ENCODE measurements at regions of chr2 and their contacts with region 1.

Region 1: DNA sequence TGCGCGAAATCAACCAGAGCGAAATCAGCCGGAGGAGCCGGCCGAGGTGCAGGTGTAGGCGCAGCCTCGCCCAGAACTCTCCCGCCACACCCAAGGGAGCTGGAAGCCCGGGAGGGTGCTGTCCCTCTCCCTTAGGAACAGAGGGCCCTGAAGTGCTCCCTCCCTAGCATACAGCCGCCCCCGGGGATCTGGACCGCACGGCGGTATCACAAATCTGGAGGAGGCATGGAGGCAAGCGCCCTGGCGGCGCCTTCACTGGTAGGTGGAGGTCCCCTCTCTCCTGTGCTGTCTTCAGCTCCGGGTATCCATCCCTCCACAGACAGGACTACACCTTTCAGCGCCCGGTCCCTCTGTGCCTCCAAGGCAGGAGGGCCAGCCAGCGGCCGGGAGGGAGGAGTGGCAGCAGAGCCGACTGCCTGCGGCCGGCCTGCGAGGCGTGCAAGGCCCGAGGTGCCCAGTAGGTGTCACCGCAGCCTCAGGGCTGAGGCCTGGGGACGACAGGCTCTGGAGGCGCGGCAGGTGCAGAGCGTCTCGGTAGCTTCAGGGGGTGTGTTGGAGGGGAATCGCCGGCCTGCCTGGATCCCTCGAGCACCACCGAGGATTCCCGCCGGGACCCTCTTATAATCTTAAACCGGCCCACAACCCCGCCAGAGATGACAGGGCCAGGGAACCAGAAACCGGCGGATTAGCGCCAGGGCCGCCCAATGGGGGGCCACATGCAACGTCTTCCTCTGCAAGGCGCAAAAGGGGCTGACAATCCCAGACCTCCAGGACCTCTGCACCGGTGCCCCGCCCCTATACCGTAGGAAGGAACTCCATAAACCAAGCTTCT is 2.8 kb downstream of the IHH start:
- DNase-seq: peak; percentile 91
- ATAC-seq: peak; percentile 82
- H3K4me3 Mint-ChIP-seq: peak overlapping the region; percentile 58
- H3K27ac Mint-ChIP-seq: no peak overlapping the region
- H3K4me1 Mint-ChIP-seq: peaks cover 25% of the 10 kb centered on the region
- H3K27me3 Mint-ChIP-seq: peaks cover 96% of the 10 kb centered on the region
- CTCF ChIP-seq: peak; percentile 80

Region 2: GRCh38 chr2:219002395-219003266 is 55.3 kb before region 1 on chr2:
- CTCF ChIA-PET with region 1: interaction called, 33 read pairs
- POLR2A ChIA-PET with region 1: interaction called, 3 read pairs
- DNase-seq: peak; percentile 95
- ATAC-seq: peak; percentile 69
- H3K4me3 Mint-ChIP-seq: peak overlapping the region; percentile 83
- H3K27ac Mint-ChIP-seq: no peak overlapping the region
- H3K4me1 Mint-ChIP-seq: peaks cover 22% of the 10 kb centered on the region
- H3K27me3 Mint-ChIP-seq: peaks cover 100% of the 10 kb centered on the region
- CTCF ChIP-seq: peak; percentile 29; the same call in 1 of the 2 replicates

Region 3: DNA sequence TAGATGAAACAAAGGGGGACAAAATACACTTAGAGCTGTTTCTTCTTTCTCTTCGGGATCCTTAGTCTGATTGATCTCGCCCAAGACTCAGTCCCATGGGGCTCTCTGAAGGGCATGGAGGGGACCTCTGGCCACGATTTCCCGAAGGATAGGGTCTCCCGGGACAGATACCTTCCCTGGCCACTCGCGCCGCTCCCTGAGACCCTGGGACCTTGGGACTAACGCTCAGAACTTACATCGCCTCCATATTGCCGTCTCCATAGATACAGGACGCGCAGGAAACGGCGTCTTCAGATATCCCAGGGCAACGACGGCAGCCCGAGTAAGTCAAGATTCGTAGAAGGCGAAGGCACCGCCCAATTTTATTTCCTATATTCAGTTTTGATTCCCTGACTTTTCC is 16.7 kb before region 1 on chr2 and contains the start of gene CFAP65:
- CTCF ChIA-PET with region 1: interaction called, 10 read pairs
- POLR2A ChIA-PET with region 1: no interaction called
- DNase-seq: peak; percentile 69
- ATAC-seq: peak; percentile 91
- H3K4me3 Mint-ChIP-seq: peak within 1 kb of the TSS; percentile 86
- H3K27ac Mint-ChIP-seq: 0 out of 2 replicates have a peak within 1 kb of the TSS, but pooled peaks have one; percentile 8
- H3K4me1 Mint-ChIP-seq: peaks cover 4% of the 10 kb centered on the region; the same call in 1 of the 2 replicates
- H3K27me3 Mint-ChIP-seq: peaks cover 30% of the 10 kb centered on the region
- CTCF ChIP-seq: no peak
- total RNA-seq, gene CFAP65: 0.44 to 1.0 TPM (median 0.48 TPM) in 3 replicates

Region 4: GRCh38 chr2:219104107-219105035 is 46.4 kb after region 1 on chr2:
- CTCF ChIA-PET with region 1: interaction called, 67 read pairs
- POLR2A ChIA-PET with region 1: no interaction called
- DNase-seq: peak; percentile 41
- ATAC-seq: peak; percentile 98
- H3K4me3 Mint-ChIP-seq: no peak overlapping the region
- H3K27ac Mint-ChIP-seq: 0 out of 2 replicates have a peak overlapping the region, but pooled peaks have one; percentile 41
- H3K4me1 Mint-ChIP-seq: peaks cover 3% of the 10 kb centered on the region
- H3K27me3 Mint-ChIP-seq: no peaks in the 10 kb centered on the region
- CTCF ChIP-seq: peak; percentile 75

Region 5: GRCh38 chr2:219160186-219161017 is 102.5 kb after region 1 on chr2 and contains the start of gene NHEJ1:
- CTCF ChIA-PET with region 1: interaction called, 97 read pairs
- POLR2A ChIA-PET with region 1: no interaction called
- DNase-seq: peak; percentile 99
- ATAC-seq: peak; percentile 96
- H3K4me3 Mint-ChIP-seq: peak within 1 kb of the TSS; percentile 79
- H3K27ac Mint-ChIP-seq: peak within 1 kb of the TSS; percentile 87
- H3K4me1 Mint-ChIP-seq: peaks cover 17% of the 10 kb centered on the region
- H3K27me3 Mint-ChIP-seq: peaks cover 19% of the 10 kb centered on the region
- CTCF ChIP-seq: peak; percentile 98
- total RNA-seq, gene NHEJ1: 18.4 to 22.3 TPM (median 21.3 TPM) in 3 replicates

Measured in WTC11 (cell line).